Sciatic nerve (tissue), 2 donors: ENCODE measurements at regions of chr22 and their contacts with region 1.

Region 1: GRCh38 chr22:40468616-40469015 is 98.2 kb downstream of the SGSM3 start:
- DNase-seq: no peak
- ATAC-seq: no peak

Region 2: DNA sequence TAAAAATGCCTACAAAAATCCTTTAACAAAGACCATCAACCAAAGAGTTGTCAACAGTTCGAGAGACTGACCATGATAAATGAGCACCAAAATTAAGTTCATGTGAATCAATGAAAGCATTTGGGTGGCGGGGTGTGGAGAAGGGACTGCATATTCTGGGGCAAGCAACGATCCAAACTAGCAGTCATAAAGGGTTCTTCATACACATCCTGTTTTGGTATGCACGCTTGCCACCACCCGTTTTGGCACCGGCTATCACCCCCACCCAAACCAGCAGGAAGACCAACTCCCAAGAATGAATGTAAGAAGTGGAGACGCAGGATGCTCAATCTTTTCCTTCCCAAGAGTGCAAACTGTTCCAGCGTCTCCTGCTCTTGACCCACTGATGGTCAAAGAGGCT is 17.4 kb before region 1 on chr22:
- intact Hi-C with region 1: loop called (anchors 1 kb)
- DNase-seq: no peak
- ATAC-seq: no peak

Region 3: DNA sequence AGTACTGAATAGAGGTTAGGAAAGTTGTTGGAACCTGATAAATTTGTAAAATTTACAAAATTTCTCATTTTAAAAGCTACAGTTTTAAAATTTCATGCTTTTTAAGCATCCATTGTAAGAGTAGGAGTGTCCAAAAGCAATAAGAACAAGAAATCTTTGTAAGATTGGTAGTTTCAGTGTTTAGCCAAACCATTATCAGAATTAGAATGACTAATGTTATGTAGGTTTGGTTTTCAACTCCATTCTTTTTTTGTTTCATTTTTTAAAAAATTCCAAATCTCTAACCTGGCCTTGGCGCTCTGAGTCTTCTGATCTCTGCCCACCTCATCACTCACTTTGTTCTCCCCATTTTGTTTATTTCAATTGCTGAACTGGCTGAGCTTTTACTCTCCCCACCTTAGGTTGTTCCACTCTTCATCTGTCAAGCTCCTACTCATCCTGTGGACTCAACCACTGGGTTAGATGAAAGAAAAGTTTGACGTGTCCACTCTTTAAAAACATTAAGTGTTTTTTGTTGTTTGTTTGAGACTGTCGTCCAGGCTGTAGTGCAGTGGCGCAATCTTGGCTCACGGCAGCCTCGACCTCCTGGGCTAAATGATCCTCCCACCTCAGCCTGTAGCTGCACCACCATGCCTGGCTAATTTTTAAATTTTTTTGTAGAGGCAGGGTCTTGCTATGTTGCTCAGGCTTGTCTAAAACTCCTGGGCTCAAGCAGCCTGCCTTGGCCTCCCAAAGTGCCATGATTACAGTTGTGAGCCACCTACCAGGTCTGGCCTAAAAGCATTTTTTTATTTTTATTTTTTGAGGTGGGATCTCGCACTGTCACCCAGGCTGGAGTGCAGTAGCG is 637.7 kb after region 1 on chr22:
- intact Hi-C with region 1: no loop called
- DNase-seq: no peak
- ATAC-seq: peak; percentile 24